Heart left ventricle (tissue), 16 donors: ENCODE measurements at regions of chr1 and their contacts with region 1.

Region 1: DNA sequence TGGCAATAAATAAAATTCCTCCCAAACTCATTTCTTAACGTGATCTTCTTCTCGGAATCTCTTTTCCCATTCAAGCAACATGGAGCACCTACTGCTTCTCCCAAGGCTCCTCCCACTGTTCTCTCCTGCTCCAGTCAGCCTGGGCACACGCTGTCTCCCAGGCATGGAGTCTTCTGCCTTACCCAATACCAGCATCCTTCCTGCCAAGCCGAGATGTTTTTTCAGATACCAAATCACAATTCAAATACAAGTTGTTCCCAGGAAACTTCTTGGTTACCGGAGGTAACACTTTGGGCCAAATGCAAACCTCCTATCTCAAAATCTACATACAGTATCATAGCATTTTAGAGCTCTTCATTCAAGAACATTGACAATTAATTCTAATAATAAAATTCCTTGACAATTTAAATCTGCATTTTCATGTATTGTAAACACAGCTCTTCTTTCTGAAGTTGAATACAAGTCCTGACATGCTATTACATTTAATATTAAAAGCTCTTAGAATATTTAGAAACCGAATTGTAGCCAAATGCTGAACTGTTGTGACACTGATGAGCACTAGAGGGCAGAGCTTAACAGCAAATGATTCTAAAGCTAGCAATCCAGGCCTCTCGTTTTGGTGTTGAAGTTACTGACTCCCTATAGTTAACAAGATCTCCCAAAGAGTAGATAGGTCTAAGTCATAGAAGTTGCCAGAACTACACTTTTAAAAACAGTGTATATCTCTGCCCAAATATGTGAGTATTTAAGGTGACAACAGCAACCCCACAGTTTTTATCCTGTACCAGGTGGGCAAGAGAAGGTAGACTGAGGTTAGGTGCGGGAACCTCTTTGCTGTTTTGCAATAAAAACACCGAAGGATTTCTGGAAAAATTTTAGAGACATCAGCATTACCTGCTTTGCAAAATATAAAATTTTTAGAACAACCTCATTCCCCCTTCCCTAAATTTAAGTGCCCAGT is 52.3 kb downstream of the BCAR3 start:
- DNase-seq: peak in 2 of 5 donors; percentile 49 to 56
- ATAC-seq: peak; percentile 47 to 68 (median 60)
- H3K4me3 ChIP-seq: no peak overlapping the region
- H3K27ac ChIP-seq: peak overlapping the region in 1 of 12 donors; percentile 34
- H3K4me1 ChIP-seq: peaks cover 0 to 34% (median 24%) of the 10 kb centered on the region in 12 donors
- H3K27me3 ChIP-seq: no peaks in the 10 kb centered on the region
- CTCF ChIP-seq: peak; percentile 75 to 94 (median 88)
- POLR2A ChIP-seq: no peak

Region 2: GRCh38 chr1:93304716-93305138 is 324.7 kb before region 1 on chr1:
- intact Hi-C with region 1: loop called in 4 of 10 experiments (anchors 5 to 10 kb)
- DNase-seq: peak in 2 of 5 donors; percentile 30 to 41
- ATAC-seq: peak in 3 of 4 donors; percentile 65 to 74 (median 70)
- H3K4me3 ChIP-seq: no peak overlapping the region
- H3K27ac ChIP-seq: no peak overlapping the region
- H3K4me1 ChIP-seq: peaks cover 0 to 5% (median 0%) of the 10 kb centered on the region in 12 donors
- H3K27me3 ChIP-seq: no peaks in the 10 kb centered on the region
- CTCF ChIP-seq: peak; percentile 80 to 96 (median 90)
- POLR2A ChIP-seq: no peak

Region 3: DNA sequence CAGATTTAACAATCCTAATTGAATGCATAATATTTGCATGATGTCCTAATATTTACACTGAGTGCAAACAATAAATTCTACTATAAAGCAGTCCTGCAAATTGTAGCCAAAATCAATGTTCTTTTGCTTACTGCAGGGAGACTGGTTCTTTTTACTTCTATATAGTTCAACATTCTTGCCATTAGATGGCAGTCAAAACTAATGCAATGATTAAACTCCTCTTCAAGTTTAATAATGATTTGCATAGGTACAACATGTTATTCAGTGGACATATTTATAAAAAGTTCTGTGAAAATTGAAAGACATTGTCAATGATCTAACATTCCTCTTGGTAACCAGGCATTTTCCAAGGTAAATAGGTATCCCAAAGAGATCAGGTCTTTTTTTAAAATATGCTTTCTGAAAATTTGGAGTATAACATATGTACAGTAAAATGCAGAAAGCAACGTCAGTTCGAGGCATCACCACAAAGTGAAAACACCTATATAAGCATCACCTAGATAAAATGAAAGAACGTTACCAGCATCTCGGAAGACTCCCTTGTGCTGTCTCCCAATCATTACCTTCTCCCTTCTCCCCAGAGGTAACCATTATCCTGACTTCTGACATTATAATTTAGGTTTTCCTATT is 191.3 kb before region 1 on chr1:
- intact Hi-C with region 1: loop called in 9 of 10 experiments (anchors 1 to 5 kb)
- DNase-seq: no peak
- ATAC-seq: peak; percentile 42 to 71 (median 46)
- H3K4me3 ChIP-seq: no peak overlapping the region
- H3K27ac ChIP-seq: no peak overlapping the region
- H3K4me1 ChIP-seq: peaks cover 0 to 7% (median 0%) of the 10 kb centered on the region in 12 donors
- H3K27me3 ChIP-seq: no peaks in the 10 kb centered on the region
- CTCF ChIP-seq: peak; percentile 63 to 82 (median 72)
- POLR2A ChIP-seq: no peak

Region 4: GRCh38 chr1:93722081-93723031 is 93.0 kb after region 1 on chr1:
- intact Hi-C with region 1: loop called in 1 of 10 experiments (anchors 5 kb)
- DNase-seq: peak; percentile 69 to 88 (median 79)
- ATAC-seq: peak; percentile 85 to 90 (median 88)
- H3K4me3 ChIP-seq: no peak overlapping the region
- H3K27ac ChIP-seq: peak overlapping the region; percentile 54 to 95 (median 82)
- H3K4me1 ChIP-seq: peaks cover 5 to 46% (median 37%) of the 10 kb centered on the region in 12 donors
- H3K27me3 ChIP-seq: no peaks in the 10 kb centered on the region
- CTCF ChIP-seq: peak in 10 of 12 donors; percentile 8 to 49 (median 31)
- POLR2A ChIP-seq: no peak

Region 5: DNA sequence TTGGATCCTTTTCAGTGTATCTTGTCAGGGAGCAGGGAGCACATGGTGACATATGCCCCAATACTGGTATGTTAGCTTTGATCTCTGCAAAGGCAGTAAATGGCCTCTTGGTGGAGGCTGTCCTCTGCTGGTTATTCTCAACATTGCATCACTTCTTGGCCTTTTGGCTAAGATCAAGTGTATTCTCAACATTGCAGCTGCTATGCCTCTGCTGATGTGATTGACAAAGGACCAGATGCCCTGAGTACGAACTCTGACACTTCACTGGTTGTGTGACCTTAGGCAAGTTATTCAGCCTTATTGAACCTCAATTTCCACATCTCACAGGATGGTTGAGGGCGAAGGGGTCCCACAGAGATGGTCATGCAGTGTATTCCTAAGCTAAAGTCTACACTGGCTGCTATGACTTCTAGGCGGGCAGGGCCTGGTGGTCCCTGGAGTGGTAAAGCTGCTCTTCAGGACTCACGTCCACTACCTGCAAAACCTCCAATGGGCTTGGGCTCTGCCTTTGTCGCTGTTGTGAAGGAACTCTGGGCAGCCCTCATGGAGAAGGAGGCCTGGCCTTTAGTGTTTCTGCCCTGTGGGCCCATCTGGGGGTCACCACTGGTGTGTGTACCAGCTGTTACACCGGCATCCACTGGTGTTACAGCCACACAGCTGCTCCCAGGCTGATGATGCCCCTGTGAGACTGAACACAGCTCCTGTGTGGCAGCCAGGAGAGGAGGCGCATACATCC is 184.8 kb after region 1 on chr1:
- intact Hi-C with region 1: loop called (anchors 1 to 5 kb)
- DNase-seq: peak in 4 of 5 donors; percentile 51 to 70 (median 59)
- ATAC-seq: peak; percentile 65 to 84 (median 77)
- H3K4me3 ChIP-seq: no peak overlapping the region
- H3K27ac ChIP-seq: no peak overlapping the region
- H3K4me1 ChIP-seq: peaks cover 0 to 57% (median 31%) of the 10 kb centered on the region in 12 donors
- H3K27me3 ChIP-seq: no peaks in the 10 kb centered on the region
- CTCF ChIP-seq: peak; percentile 94 to 100 (median 97)
- POLR2A ChIP-seq: no peak